Mammary epithelial cell (primary cell): ENCODE measurements at regions of chr1 and their contacts with region 1.

Region 1: GRCh38 chr1:46113948-46114347 is 18.5 kb downstream of the PIK3R3 start:
- DNase-seq: no peak
- H3K4me3 ChIP-seq: no peak overlapping the region
- H3K27ac ChIP-seq: no peak overlapping the region
- H3K4me1 ChIP-seq: no peaks in the 10 kb centered on the region
- H3K27me3 ChIP-seq: no peaks in the 10 kb centered on the region
- CTCF ChIP-seq: no peak

Region 2: DNA sequence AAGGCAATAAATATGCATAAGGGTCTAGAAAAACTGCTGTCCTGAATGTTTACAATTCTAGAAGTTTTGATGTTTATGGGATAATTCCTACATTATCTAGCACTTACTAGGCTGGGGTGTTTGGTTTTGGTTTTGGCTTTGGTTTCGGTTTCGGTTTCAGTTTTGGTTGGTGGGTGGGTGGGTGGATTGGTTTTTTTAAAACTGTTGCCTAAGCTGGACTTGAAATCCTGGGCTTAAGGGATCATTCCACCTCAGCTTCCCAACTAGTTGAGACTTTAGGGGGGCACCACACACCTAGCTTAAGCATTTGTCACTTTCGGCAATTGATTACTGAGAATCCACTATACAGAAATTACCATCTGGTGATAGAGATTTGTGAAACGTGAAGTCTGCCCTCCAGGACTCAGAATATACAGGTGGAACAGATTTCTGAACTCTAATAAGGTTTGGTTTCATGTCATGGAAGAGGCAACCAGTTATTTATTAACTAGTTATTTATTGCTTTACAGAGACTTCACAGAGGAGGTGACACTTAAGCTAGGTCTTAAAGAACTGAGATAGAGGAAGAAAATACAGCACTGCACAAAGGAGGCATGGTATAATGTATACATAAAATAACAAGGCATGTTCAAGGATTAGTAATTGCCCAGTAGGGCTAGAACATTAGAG is 51.2 kb before region 1 on chr1:
- CTCF ChIA-PET with region 1: no interaction called
- dilution Hi-C with region 1: loop called (anchors 10 kb)
- in situ Hi-C with region 1: no loop called
- intact Hi-C with region 1: no loop called
- DNase-seq: no peak
- H3K4me3 ChIP-seq: no peak overlapping the region
- H3K27ac ChIP-seq: no peak overlapping the region
- H3K4me1 ChIP-seq: no peaks in the 10 kb centered on the region
- H3K27me3 ChIP-seq: no peaks in the 10 kb centered on the region
- CTCF ChIP-seq: no peak